ENCODE measurements at regions of chrX and their contacts with region 1.

Region 1: GRCh38 chrX:124358800-124359383 is 12.5 kb downstream of the SH2D1A start:
- DNase-seq: peak in 2 of 9 experiments; percentile 43 to 59
- ATAC-seq: peak; percentile 67
- H3K4me3 ChIP-seq: peak overlapping the region in 1 of 2 experiments; percentile 10
- H3K4me3 Mint-ChIP-seq: peak overlapping the region; percentile 69
- H3K27ac ChIP-seq: peak overlapping the region in 1 of 2 experiments; percentile 70
- H3K27ac Mint-ChIP-seq: peak overlapping the region; percentile 88
- H3K4me1 ChIP-seq: peaks cover 38% of the 10 kb centered on the region
- H3K4me1 Mint-ChIP-seq: peaks cover 60% of the 10 kb centered on the region
- H3K27me3 ChIP-seq: no peaks in the 10 kb centered on the region
- H3K27me3 Mint-ChIP-seq: no peaks in the 10 kb centered on the region
- CTCF ChIP-seq: no peak

Region 2: GRCh38 chrX:122941806-122942205 is 1417.1 kb before region 1 on chrX:
- CTCF ChIA-PET with region 1: no interaction called
- POLR2A ChIA-PET with region 1: no interaction called
- intact Hi-C with region 1: no loop called
- DNase-seq: no peak
- ATAC-seq: no peak
- H3K4me3 ChIP-seq: no peak overlapping the region
- H3K4me3 Mint-ChIP-seq: no peak overlapping the region
- H3K27ac ChIP-seq: no peak overlapping the region
- H3K27ac Mint-ChIP-seq: no peak overlapping the region
- H3K4me1 ChIP-seq: no peaks in the 10 kb centered on the region
- H3K4me1 Mint-ChIP-seq: no peaks in the 10 kb centered on the region
- H3K27me3 ChIP-seq: no peaks in the 10 kb centered on the region
- H3K27me3 Mint-ChIP-seq: no peaks in the 10 kb centered on the region
- CTCF ChIP-seq: no peak

Region 3: GRCh38 chrX:124098089-124098488 is 260.8 kb before region 1 on chrX:
- CTCF ChIA-PET with region 1: no interaction called
- POLR2A ChIA-PET with region 1: no interaction called
- intact Hi-C with region 1: loop called in 1 of 2 experiments (anchors 10 kb)
- DNase-seq: peak in 2 of 9 experiments; percentile 35 to 53
- ATAC-seq: peak; percentile 46
- H3K4me3 ChIP-seq: no peak overlapping the region
- H3K4me3 Mint-ChIP-seq: no peak overlapping the region
- H3K27ac ChIP-seq: no peak overlapping the region
- H3K27ac Mint-ChIP-seq: no peak overlapping the region
- H3K4me1 ChIP-seq: no peaks in the 10 kb centered on the region
- H3K4me1 Mint-ChIP-seq: no peaks in the 10 kb centered on the region
- H3K27me3 ChIP-seq: no peaks in the 10 kb centered on the region
- H3K27me3 Mint-ChIP-seq: no peaks in the 10 kb centered on the region
- CTCF ChIP-seq: peak; percentile 60

Region 4: DNA sequence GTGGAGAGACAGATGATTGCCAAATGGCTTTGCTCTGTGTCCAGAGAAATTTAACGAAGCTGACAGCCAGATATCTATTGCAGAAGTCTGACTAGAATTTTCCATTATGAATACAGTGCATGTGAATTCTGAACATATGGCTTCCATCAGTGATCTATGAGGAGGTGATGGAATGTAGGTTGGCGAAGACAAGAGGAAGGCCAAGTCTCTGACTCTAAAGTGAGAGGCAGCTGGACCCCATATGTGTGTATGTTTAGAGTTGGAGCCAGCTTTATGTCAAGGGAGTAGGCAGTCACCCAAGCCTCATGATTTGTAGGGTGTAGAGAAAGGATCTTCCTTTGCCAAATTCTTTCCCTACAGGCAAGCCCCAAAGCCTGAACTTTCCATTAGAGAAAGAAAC is 102.7 kb before region 1 on chrX:
- CTCF ChIA-PET with region 1: no interaction called
- POLR2A ChIA-PET with region 1: no interaction called
- intact Hi-C with region 1: no loop called
- DNase-seq: no peak
- ATAC-seq: no peak
- H3K4me3 ChIP-seq: no peak overlapping the region
- H3K4me3 Mint-ChIP-seq: no peak overlapping the region
- H3K27ac ChIP-seq: no peak overlapping the region
- H3K27ac Mint-ChIP-seq: no peak overlapping the region
- H3K4me1 ChIP-seq: no peaks in the 10 kb centered on the region
- H3K4me1 Mint-ChIP-seq: peaks cover 4% of the 10 kb centered on the region
- H3K27me3 ChIP-seq: no peaks in the 10 kb centered on the region
- H3K27me3 Mint-ChIP-seq: no peaks in the 10 kb centered on the region
- CTCF ChIP-seq: no peak

Measured in CD8-positive, alpha-beta T cell (primary cell).